CD4-positive, alpha-beta T cell (primary cell): ENCODE measurements at regions of chr20 and their contacts with region 1.

Region 1: GRCh38 chr20:63641792-63642544 is 11.3 kb downstream of the STMN3 start:
- DNase-seq: peak; percentile 97 to 100 (median 98)
- ATAC-seq: peak; percentile 60
- H3K4me3 ChIP-seq: peak overlapping the region; percentile 91
- H3K4me3 Mint-ChIP-seq: peak overlapping the region; percentile 88
- H3K27ac ChIP-seq: peak overlapping the region; percentile 68 to 87
- H3K27ac Mint-ChIP-seq: peak overlapping the region; percentile 94
- H3K4me1 ChIP-seq: peaks cover 44% of the 10 kb centered on the region
- H3K4me1 Mint-ChIP-seq: peaks cover 35% of the 10 kb centered on the region
- H3K27me3 ChIP-seq: no peaks in the 10 kb centered on the region
- H3K27me3 Mint-ChIP-seq: peaks cover 4% of the 10 kb centered on the region
- CTCF ChIP-seq: peak; percentile 48

Region 2: DNA sequence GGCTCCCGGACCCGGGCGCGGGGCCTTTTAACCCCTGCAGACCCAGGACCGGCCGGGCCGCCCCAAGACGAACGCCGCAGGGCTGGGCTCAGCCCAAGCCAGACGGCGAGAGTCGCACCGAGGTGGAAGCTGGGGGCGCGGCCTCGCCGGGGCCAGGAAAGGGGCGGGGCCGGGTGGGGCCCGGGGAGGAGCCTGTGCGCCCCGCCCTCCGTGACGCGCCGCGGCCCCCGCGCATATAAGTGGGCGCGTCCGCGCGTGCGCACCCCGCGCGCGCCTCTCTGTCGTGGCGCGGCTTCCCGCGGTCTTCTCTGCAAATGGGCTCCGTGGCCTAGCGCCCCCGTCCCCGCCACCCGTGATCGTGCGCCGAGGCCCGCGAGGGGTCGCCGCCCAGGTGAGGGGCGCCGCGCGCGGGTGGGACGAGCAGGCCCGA is 121.4 kb before region 1 on chr20 and contains the start of gene PPDPF:
- CTCF ChIA-PET with region 1: no interaction called
- POLR2A ChIA-PET with region 1: interaction called, 13 read pairs
- intact Hi-C with region 1: no loop called
- DNase-seq: peak; percentile 75 to 95 (median 84)
- ATAC-seq: peak; percentile 80
- H3K4me3 ChIP-seq: peak within 1 kb of the TSS; percentile 65
- H3K4me3 Mint-ChIP-seq: peak within 1 kb of the TSS; percentile 88
- H3K27ac ChIP-seq: peak within 1 kb of the TSS in 1 of 2 donors; percentile 35
- H3K27ac Mint-ChIP-seq: peak within 1 kb of the TSS; percentile 69
- H3K4me1 ChIP-seq: peaks cover 29% of the 10 kb centered on the region
- H3K4me1 Mint-ChIP-seq: peaks cover 13% of the 10 kb centered on the region
- H3K27me3 ChIP-seq: no peaks in the 10 kb centered on the region
- H3K27me3 Mint-ChIP-seq: no peaks in the 10 kb centered on the region
- CTCF ChIP-seq: no peak
- total RNA-seq, gene PPDPF: 249 to 251 TPM

Region 3: GRCh38 chr20:63567386-63568169 is 74.4 kb before region 1 on chr20:
- CTCF ChIA-PET with region 1: no interaction called
- POLR2A ChIA-PET with region 1: interaction called, 11 read pairs
- intact Hi-C with region 1: no loop called
- DNase-seq: peak; percentile 25 to 82 (median 38)
- ATAC-seq: peak; percentile 57
- H3K4me3 ChIP-seq: peak overlapping the region; percentile 52
- H3K4me3 Mint-ChIP-seq: peak overlapping the region; percentile 78
- H3K27ac ChIP-seq: no peak overlapping the region
- H3K27ac Mint-ChIP-seq: peak overlapping the region; percentile 33
- H3K4me1 ChIP-seq: peaks cover 39% of the 10 kb centered on the region
- H3K4me1 Mint-ChIP-seq: peaks cover 16% of the 10 kb centered on the region
- H3K27me3 ChIP-seq: no peaks in the 10 kb centered on the region
- H3K27me3 Mint-ChIP-seq: no peaks in the 10 kb centered on the region
- CTCF ChIP-seq: no peak

Region 4: GRCh38 chr20:63587776-63588591 is 54.0 kb before region 1 on chr20:
- CTCF ChIA-PET with region 1: no interaction called
- POLR2A ChIA-PET with region 1: interaction called, 11 read pairs
- intact Hi-C with region 1: no loop called
- DNase-seq: peak in 5 of 14 experiments; percentile 16 to 43 (median 36)
- ATAC-seq: peak; percentile 84
- H3K4me3 ChIP-seq: no peak overlapping the region
- H3K4me3 Mint-ChIP-seq: peak overlapping the region; percentile 45
- H3K27ac ChIP-seq: no peak overlapping the region
- H3K27ac Mint-ChIP-seq: peak overlapping the region; percentile 86
- H3K4me1 ChIP-seq: peaks cover 18% of the 10 kb centered on the region
- H3K4me1 Mint-ChIP-seq: peaks cover 23% of the 10 kb centered on the region
- H3K27me3 ChIP-seq: no peaks in the 10 kb centered on the region
- H3K27me3 Mint-ChIP-seq: no peaks in the 10 kb centered on the region
- CTCF ChIP-seq: no peak

Region 5: DNA sequence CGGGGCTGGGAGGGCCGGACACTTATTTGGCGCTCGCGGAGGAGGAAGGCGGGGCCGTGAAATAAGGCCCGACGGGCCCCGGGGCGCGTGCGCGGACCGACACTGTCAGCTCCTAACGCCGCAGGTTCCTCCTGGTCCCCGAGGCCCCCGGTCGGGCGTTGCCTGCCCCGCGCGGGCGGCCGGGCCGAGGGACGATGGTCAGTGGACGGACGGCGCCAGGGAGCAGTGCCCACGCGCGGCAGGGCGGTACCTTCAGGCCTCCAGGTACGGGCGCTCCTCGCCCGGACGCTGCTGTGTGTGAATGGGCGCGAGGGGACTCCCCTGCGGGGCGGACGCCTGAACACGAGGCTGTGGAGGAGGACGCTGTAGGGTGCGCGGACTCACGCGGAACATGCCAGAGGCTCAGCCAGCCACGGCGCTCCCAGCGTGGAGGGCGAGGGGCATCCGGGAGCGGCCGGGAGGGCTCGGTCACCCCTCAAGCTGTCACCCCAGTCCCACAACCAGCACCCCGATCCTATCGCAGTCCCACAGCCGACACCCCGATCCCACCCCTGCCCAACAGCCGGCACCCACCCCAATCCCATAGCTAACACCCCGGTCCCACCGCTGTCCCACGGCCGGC is 14.7 kb before region 1 on chr20:
- CTCF ChIA-PET with region 1: interaction called, 14 read pairs
- POLR2A ChIA-PET with region 1: interaction called, 449 read pairs
- intact Hi-C with region 1: loop called (anchors 1 kb)
- DNase-seq: peak in 13 of 14 experiments; percentile 88 to 97 (median 95)
- ATAC-seq: peak; percentile 77
- H3K4me3 ChIP-seq: peak overlapping the region; percentile 95
- H3K4me3 Mint-ChIP-seq: peak overlapping the region; percentile 98
- H3K27ac ChIP-seq: peak overlapping the region; percentile 81 to 89
- H3K27ac Mint-ChIP-seq: peak overlapping the region; percentile 90
- H3K4me1 ChIP-seq: peaks cover 52% of the 10 kb centered on the region
- H3K4me1 Mint-ChIP-seq: peaks cover 38% of the 10 kb centered on the region
- H3K27me3 ChIP-seq: no peaks in the 10 kb centered on the region
- H3K27me3 Mint-ChIP-seq: no peaks in the 10 kb centered on the region
- CTCF ChIP-seq: no peak

Region 6: DNA sequence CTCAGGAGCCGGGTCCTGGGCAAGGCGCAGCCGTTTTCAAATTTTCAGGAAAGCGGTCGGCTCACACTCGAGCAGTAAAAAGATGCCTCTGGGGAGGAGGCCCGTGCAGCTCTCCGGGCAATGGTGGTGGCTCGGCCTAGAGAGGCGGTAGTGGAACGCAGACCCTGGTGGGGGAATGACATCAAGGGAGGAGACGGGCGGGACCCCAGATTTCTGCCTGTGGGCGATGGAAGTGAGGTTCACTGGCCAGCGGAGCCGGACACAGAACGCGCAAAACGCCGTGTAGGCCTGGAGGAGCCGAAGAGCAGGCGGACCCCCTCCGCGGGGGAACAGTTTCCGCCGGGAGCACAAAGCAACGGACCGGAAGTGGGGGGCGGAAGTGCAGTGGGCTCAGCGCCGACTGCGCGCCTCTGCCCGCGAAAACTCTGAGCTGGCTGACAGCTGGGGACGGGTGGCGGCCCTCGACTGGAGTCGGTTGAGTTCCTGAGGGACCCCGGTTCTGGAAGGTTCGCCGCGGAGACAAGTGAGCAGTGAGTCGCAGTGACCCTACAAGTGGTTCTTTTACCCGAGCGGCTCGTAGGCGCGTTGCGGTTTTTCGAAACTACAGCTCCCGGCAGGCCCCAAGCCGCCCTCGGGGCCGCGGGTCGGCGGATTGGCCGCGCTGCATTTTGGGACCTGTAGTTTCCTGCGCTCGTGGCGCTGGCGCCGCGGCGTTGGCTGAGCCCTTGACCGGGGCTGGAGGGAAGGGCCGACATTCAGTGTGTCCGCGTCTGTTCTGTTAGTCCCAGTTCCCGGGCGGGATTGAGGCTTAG is 16.2 kb after region 1 on chr20 and contains the start of gene RTEL1:
- CTCF ChIA-PET with region 1: interaction called, 7 read pairs
- POLR2A ChIA-PET with region 1: interaction called, 32 read pairs
- intact Hi-C with region 1: loop called in 1 of 2 experiments (anchors 2 kb)
- DNase-seq: peak; percentile 77 to 93 (median 86)
- ATAC-seq: peak; percentile 83
- H3K4me3 ChIP-seq: peak within 1 kb of the TSS; percentile 76
- H3K4me3 Mint-ChIP-seq: peak within 1 kb of the TSS; percentile 98
- H3K27ac ChIP-seq: peak within 1 kb of the TSS; percentile 56 to 87
- H3K27ac Mint-ChIP-seq: peak within 1 kb of the TSS; percentile 96
- H3K4me1 ChIP-seq: peaks cover 47% of the 10 kb centered on the region
- H3K4me1 Mint-ChIP-seq: peaks cover 38% of the 10 kb centered on the region
- H3K27me3 ChIP-seq: no peaks in the 10 kb centered on the region
- H3K27me3 Mint-ChIP-seq: no peaks in the 10 kb centered on the region
- CTCF ChIP-seq: no peak
- total RNA-seq, gene RTEL1: 25.5 to 27.6 TPM

Region 7: GRCh38 chr20:63810730-63811494 is 168.9 kb after region 1 on chr20:
- CTCF ChIA-PET with region 1: no interaction called
- POLR2A ChIA-PET with region 1: no interaction called
- intact Hi-C with region 1: no loop called
- DNase-seq: no peak
- ATAC-seq: no peak
- H3K4me3 ChIP-seq: no peak overlapping the region
- H3K4me3 Mint-ChIP-seq: no peak overlapping the region
- H3K27ac ChIP-seq: no peak overlapping the region
- H3K27ac Mint-ChIP-seq: no peak overlapping the region
- H3K4me1 ChIP-seq: no peaks in the 10 kb centered on the region
- H3K4me1 Mint-ChIP-seq: no peaks in the 10 kb centered on the region
- H3K27me3 ChIP-seq: no peaks in the 10 kb centered on the region
- H3K27me3 Mint-ChIP-seq: no peaks in the 10 kb centered on the region
- CTCF ChIP-seq: no peak